HepG2 (cell line): ENCODE measurements at regions of chrX and their contacts with region 1.

Region 1: DNA sequence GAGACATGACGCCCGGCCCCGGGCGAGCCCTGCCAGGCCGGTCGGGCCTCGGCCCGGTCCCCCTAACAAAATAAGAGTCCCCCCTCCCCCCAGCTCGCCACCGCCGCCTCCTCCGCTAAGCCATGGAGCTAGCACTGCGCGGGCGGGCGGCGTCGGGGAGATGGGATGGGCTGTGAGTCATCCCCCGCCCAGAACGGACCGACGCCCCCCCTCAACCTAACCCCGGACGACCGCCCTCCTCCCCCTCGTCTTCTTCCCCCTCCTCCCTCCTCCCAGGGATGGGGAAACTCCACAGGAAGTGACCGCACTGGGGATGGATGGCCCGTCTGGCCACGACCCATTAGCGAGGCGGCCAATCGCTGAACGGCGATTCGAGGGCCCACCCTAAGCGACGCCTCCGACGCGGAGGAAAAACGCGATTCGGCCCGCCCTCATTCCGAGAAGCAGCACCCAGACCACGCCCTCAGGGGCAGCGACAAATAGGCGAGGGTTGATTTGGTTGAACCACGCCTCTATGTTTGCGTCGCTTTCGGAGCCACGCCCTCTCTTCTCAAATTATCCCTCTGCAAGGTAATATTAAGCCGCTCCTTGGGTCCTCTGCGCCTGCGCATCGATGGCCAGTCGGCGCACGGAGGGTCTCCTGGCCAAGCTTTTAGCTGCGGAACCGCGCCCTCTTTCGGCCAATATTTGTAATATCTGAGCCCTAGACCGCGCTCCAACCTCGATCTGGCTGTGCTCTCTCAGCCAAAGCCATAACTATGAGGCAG is at the start of gene TFE3:
- DNase-seq: peak; percentile 97
- ATAC-seq: peak; percentile 89
- H3K4me3 ChIP-seq: peak within 1 kb of the TSS; percentile 73 to 82 (median 78)
- H3K27ac ChIP-seq: peak within 1 kb of the TSS; percentile 66
- H3K4me1 ChIP-seq: peaks cover 41% of the 10 kb centered on the region
- H3K27me3 ChIP-seq: no peaks in the 10 kb centered on the region; a peak in 1 of 5 replicates
- CTCF ChIP-seq: peak; percentile 89
- EP300 ChIP-seq: no peak; a peak in 1 of 4 replicates
- POLR2A ChIP-seq: 0 out of 4 replicates have a peak, but pooled peaks of 1 of the 2 experiments have one; percentile 47
- RAD21 ChIP-seq: peak; percentile 73; the same call in 1 of the 2 replicates
- total RNA-seq, gene TFE3: 8.8 and 12.3 TPM in 2 replicates

Region 2: DNA sequence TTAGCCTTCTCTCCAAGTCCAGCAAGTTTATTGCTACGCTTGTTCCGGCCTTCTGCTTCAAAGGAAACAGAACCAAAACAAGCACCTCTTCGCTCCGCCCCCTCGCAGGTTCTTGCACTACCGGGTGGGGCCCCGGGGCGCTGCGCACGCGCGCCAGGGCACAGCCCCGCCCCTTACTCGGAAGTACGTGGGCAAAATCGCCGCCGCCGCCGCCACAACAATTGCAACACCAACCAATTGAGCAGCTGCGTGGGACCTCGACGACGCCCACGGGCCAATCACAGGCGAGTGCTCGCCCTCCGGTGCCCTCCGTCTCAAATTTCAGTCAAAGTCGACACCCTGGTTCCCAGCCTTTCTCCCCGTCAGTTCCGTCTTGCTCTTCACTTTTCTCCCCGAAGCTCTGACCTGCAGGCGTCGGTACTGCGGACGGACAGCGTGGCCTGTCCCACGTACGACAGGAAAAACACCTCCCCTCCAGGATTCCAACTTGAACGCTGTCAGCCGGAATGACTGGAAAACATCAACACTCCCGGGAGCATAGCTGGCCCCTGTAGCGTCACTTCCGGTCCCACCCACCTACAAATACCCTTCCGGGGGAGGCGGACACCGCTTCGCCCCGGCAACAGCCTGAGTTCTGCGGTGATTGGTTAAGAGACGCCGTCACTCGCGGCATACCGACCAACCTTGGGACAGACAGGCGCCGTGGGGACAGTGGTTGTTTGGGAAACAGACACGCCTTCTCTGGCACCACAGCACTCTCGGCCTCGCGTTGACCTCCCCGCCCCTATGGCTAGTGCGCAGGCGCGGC is 85.4 kb before region 1 on chrX:
- CTCF ChIA-PET with region 1: no interaction called
- POLR2A ChIA-PET with region 1: interaction called, 8 read pairs
- in situ Hi-C with region 1: no loop called
- intact Hi-C with region 1: loop called (anchors 5 kb)
- DNase-seq: peak; percentile 93
- ATAC-seq: peak; percentile 88
- H3K4me3 ChIP-seq: peak overlapping the region; percentile 62 to 81 (median 76); a peak in 5 of 6 replicates
- H3K27ac ChIP-seq: peak overlapping the region; percentile 98
- H3K4me1 ChIP-seq: peaks cover 67% of the 10 kb centered on the region
- H3K27me3 ChIP-seq: no peaks in the 10 kb centered on the region
- CTCF ChIP-seq: no peak
- EP300 ChIP-seq: no peak; a peak in 1 of 4 replicates
- POLR2A ChIP-seq: peak in 1 of 2 experiments; percentile 67; a peak in 2 of 4 replicates
- RAD21 ChIP-seq: no peak

Region 3: DNA sequence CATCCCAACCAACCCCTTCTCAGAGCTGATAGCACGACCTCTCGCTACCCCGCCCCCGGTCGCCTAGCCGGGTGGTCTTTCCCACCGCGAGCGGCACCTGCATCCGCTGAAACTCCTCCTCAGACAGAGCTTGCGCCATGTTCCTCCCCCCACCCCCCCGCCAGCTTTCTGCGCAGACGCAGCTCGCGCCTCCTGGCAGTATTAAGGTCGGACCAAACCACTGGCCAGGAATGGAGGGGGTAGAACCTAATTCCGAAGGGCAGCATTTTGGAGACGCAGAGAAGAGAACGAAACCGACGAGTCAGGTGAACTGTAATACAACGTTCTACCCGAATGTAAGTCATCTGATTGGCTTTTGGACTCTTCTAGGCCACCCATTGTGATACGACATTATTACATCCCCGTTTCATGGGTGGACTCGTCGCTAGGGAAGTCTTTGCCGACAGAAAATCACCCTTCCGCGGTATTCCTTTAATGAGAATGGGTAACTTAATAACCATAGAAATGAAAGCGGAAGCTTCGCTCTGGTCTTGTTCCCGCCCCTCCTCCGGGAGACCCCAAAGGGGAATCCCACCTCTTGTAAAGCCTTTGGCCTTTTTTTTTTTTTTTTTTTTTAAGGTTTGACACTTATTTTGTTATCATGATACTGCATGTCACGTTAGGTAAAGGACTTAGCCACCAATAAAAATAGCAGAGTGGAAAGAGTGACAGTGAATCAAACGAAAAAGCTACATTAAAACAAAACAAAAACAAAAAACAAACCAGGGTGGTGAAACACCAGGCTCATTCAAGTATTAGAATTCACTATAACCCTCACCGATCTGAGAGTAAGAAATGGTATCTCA is 41.1 kb before region 1 on chrX and contains the start of gene GRIPAP1:
- CTCF ChIA-PET with region 1: no interaction called
- POLR2A ChIA-PET with region 1: interaction called, 12 read pairs
- in situ Hi-C with region 1: no loop called
- intact Hi-C with region 1: no loop called
- DNase-seq: peak; percentile 73
- ATAC-seq: peak; percentile 85
- H3K4me3 ChIP-seq: peak within 1 kb of the TSS; percentile 64 to 86 (median 75)
- H3K27ac ChIP-seq: peak within 1 kb of the TSS; percentile 99
- H3K4me1 ChIP-seq: peaks cover 18% of the 10 kb centered on the region
- H3K27me3 ChIP-seq: no peaks in the 10 kb centered on the region
- CTCF ChIP-seq: no peak
- EP300 ChIP-seq: no peak
- POLR2A ChIP-seq: peak in 1 of 2 experiments; percentile 73; a peak in 3 of 4 replicates
- RAD21 ChIP-seq: no peak
- total RNA-seq, gene GRIPAP1: 15.0 and 16.1 TPM in 2 replicates

Region 4: GRCh38 chrX:49053223-49054072 is 10.0 kb after region 1 on chrX:
- CTCF ChIA-PET with region 1: no interaction called
- POLR2A ChIA-PET with region 1: interaction called, 20 read pairs
- in situ Hi-C with region 1: no loop called
- intact Hi-C with region 1: no loop called
- DNase-seq: peak; percentile 45
- ATAC-seq: peak; percentile 83
- H3K4me3 ChIP-seq: peak overlapping the region; percentile 47 to 66 (median 66); a peak in 5 of 6 replicates
- H3K27ac ChIP-seq: peak overlapping the region; percentile 79
- H3K4me1 ChIP-seq: peaks cover 37% of the 10 kb centered on the region
- H3K27me3 ChIP-seq: no peaks in the 10 kb centered on the region
- CTCF ChIP-seq: no peak
- EP300 ChIP-seq: no peak
- POLR2A ChIP-seq: peak in 1 of 2 experiments; percentile 54; a peak in 1 of 4 replicates
- RAD21 ChIP-seq: no peak

Region 5: DNA sequence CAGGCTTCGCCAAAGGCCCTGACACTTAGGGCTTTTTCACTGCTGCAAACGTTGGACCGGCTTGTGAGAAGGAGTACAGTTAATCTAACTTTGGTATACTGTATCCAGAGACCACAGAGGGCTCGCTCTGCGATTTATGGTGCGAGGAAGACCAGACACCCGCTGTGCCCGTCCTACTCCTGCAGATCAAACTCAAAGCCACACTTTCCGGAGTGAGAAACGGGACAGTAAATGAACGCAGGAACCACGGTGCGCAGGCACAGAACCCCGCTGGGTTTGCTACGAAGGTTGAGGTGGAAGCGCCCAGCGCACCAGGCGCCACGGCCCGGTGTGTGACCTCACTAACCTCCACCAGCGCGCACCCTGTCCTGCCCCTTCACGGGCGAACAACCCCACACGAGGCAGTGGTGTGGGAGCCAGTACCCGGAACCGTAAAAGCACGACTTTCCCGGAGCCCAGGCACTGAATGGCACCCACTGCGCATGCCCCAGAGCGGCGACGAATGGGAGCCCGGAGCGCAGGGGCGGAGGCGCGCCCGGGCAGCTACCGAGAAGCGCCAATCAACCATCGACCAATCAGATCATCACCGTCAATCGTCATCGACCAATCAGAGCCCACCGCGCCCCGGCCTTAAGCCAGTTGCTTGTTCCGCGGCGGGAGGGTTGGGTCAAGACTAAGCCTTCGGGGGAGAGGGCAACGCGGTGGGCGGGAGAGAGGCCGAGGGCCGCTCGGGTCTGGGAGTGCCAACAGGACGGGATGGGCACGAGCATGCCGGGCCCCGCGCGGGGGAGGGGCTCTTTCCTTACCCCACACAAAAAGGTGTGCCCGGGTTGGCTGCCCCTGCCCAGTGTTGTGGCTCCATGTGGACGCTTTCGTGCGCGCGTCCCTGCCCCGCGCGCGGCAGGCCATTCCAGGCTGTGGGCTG is 57.6 kb after region 1 on chrX:
- CTCF ChIA-PET with region 1: no interaction called
- POLR2A ChIA-PET with region 1: no interaction called
- in situ Hi-C with region 1: no loop called
- intact Hi-C with region 1: loop called (anchors 2 kb)
- DNase-seq: peak; percentile 89
- ATAC-seq: peak; percentile 87
- H3K4me3 ChIP-seq: peak overlapping the region; percentile 63 to 86 (median 74)
- H3K27ac ChIP-seq: peak overlapping the region; percentile 94
- H3K4me1 ChIP-seq: peaks cover 29% of the 10 kb centered on the region
- H3K27me3 ChIP-seq: no peaks in the 10 kb centered on the region
- CTCF ChIP-seq: no peak
- EP300 ChIP-seq: no peak
- POLR2A ChIP-seq: peak; percentile 59 to 86
- RAD21 ChIP-seq: no peak